HepG2 (cell line): ENCODE measurements at regions of chr3 and their contacts with region 1.

Region 1: GRCh38 chr3:124492811-124493210 is 237.4 kb upstream of the UMPS start:
- DNase-seq: peak; percentile 73
- ATAC-seq: peak; percentile 98
- H3K4me3 ChIP-seq: no peak overlapping the region
- H3K27ac ChIP-seq: no peak overlapping the region
- H3K4me1 ChIP-seq: no peaks in the 10 kb centered on the region
- H3K27me3 ChIP-seq: peaks cover 1 to 23% of the 10 kb centered on the region in 2 experiments; a peak in 3 of 5 replicates
- CTCF ChIP-seq: peak; percentile 84
- EP300 ChIP-seq: no peak
- POLR2A ChIP-seq: no peak
- RAD21 ChIP-seq: peak; percentile 60; the same call in 1 of the 2 replicates

Region 2: GRCh38 chr3:124478830-124479229 is 14.0 kb before region 1 on chr3:
- CTCF ChIA-PET with region 1: no interaction called
- POLR2A ChIA-PET with region 1: no interaction called
- in situ Hi-C with region 1: no loop called
- intact Hi-C with region 1: no loop called
- DNase-seq: no peak
- ATAC-seq: no peak
- H3K4me3 ChIP-seq: no peak overlapping the region
- H3K27ac ChIP-seq: no peak overlapping the region
- H3K4me1 ChIP-seq: no peaks in the 10 kb centered on the region
- H3K27me3 ChIP-seq: peaks cover 0 to 5% of the 10 kb centered on the region in 2 experiments; a peak in 1 of 5 replicates
- CTCF ChIP-seq: no peak
- EP300 ChIP-seq: no peak
- POLR2A ChIP-seq: no peak
- RAD21 ChIP-seq: no peak

Region 3: DNA sequence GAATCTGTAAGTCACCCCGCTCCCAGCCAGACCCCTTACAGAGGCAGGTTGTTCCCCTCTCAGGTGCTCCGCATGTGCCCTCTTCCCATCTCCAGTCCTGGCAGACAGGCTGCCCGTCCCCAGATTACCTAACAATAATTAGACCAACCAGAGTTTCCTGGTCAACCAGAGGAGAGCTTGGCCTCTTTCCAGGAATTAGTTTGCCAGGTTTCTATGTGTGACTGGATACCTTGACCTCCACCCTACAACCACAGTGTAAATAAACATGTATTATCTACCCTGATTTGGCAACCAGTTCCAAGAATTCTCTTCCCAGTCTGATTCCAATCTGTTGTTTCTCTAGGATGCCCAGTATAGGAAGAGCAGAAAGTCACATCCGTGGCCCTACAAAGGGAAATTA is 59.4 kb after region 1 on chr3:
- CTCF ChIA-PET with region 1: interaction called, 47 read pairs
- POLR2A ChIA-PET with region 1: no interaction called
- in situ Hi-C with region 1: loop called (anchors 5 kb)
- intact Hi-C with region 1: loop called (anchors 1 kb)
- DNase-seq: peak; percentile 94
- ATAC-seq: peak; percentile 83
- H3K4me3 ChIP-seq: no peak overlapping the region
- H3K27ac ChIP-seq: no peak overlapping the region
- H3K4me1 ChIP-seq: peaks cover 20% of the 10 kb centered on the region
- H3K27me3 ChIP-seq: peaks cover 3 to 33% of the 10 kb centered on the region in 2 experiments; a peak in 4 of 5 replicates
- CTCF ChIP-seq: no peak
- EP300 ChIP-seq: peak in 1 of 2 experiments; percentile 63; a peak in 1 of 4 replicates
- POLR2A ChIP-seq: no peak
- RAD21 ChIP-seq: no peak